Naive thymus-derived CD8-positive, alpha-beta T cell (primary cell): ENCODE measurements at regions of chr22 and their contacts with region 1.

Region 1: DNA sequence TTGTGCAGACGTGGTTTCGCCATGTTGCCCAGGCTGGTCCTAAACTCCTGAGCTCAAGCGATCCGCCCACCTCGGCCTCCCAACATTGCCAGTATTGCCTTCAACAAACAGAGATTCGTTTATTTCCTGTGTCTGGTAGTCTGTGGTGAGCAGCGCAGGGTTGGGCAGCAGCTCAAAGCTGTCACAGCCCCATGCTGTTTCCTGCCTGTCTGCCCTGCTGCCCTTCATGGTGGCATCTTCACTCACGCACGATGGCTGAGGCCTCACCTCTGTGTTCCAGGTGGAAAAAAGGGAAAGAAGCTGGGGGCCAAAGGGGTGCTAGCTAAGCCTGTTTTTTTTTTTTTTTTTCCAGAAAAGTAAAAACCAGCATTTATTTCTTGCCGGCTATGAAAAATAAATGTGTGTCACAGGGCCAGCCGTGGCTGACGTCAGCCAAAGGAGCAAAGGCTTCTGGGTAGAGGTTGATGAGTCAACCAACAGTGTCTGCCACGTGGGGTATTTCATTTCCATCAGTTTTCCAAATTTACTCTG is 28.8 kb downstream of the TBC1D22A start:
- DNase-seq: peak; percentile 51 to 89 (median 80)
- ATAC-seq: peak; percentile 96 to 98
- H3K4me3 Mint-ChIP-seq: peak overlapping the region; percentile 69 to 89 (median 84)
- H3K27ac Mint-ChIP-seq: peak overlapping the region; percentile 99 to 100 (median 100)
- H3K4me1 Mint-ChIP-seq: peaks cover 14 to 62% (median 38%) of the 10 kb centered on the region in 4 donors
- H3K27me3 Mint-ChIP-seq: no peaks in the 10 kb centered on the region

Region 2: DNA sequence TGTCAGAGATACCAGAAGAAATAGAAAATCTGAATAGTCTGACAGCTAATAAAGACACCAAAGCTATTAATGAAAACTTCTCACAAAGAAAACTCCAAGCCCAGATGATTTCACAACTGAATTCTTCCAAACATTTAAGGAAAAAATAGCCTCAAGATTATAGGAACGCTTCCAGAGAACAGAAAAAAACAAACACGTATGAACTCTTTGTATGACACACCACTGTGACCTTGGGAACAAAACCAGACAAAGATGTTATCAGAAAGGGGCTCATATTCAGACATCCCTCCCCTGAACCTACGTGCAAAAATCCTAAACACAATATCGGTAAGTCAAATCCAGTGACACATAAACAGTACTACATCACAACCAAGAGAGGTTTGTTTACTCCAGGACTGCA is 76.7 kb before region 1 on chr22:
- POLR2A ChIA-PET with region 1: no interaction called
- DNase-seq: no peak
- ATAC-seq: no peak
- H3K4me3 Mint-ChIP-seq: no peak overlapping the region
- H3K27ac Mint-ChIP-seq: peak overlapping the region in 3 of 10 donors; percentile 3 to 37 (median 6)
- H3K4me1 Mint-ChIP-seq: peaks cover 7 to 10% (median 8%) of the 10 kb centered on the region in 4 donors
- H3K27me3 Mint-ChIP-seq: no peaks in the 10 kb centered on the region

Region 3: GRCh38 chr22:46737976-46738646 is 53.2 kb before region 1 on chr22 and contains the start of gene CERK:
- POLR2A ChIA-PET with region 1: interaction called, 26 read pairs
- DNase-seq: peak; percentile 39 to 80 (median 58)
- ATAC-seq: peak; percentile 45 to 65
- H3K4me3 Mint-ChIP-seq: peak within 1 kb of the TSS; percentile 91 to 100 (median 100)
- H3K27ac Mint-ChIP-seq: peak within 1 kb of the TSS; percentile 95 to 100 (median 99)
- H3K4me1 Mint-ChIP-seq: peaks cover 25 to 48% (median 48%) of the 10 kb centered on the region in 4 donors
- H3K27me3 Mint-ChIP-seq: no peaks in the 10 kb centered on the region
- polyA plus RNA-seq, gene CERK: 39.4 to 61.2 (median 41.6) TPM

Region 4: DNA sequence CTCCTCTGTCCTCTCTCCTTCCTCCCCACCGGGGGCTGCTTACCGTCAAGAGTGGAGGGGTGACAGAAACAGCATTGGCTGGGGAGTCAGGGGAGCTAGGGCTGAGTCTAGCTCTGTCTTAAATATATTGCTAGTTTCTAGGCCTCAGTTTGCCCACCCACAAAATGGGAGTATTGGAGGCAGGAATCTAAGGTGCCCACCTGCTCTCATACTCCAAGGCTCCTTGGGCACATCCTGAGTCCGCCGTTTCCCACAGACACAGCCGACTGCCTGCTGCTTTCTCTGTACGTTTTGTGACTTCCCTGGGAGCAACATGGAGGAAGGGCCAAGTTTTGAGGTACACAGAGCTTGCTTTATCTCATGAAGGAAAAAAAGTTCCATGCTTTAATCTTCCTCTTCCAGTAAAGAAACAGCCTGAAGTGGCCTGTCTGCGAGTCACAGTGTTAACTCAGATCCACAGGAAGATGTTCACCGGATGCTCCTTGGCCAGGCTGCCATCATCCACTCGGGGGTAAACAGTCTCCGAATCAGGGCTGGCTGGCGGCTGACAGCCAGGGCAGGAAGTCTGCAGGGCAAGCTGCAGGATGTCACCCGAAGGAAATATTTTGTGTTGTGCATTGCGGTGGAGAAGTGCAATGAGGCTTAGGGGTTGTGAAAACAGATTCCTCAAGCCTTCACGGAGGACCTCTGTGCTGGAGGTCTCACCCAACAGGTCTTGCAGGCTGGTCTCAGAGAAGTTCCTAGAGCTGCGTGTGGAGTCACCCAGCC is 42.2 kb before region 1 on chr22:
- POLR2A ChIA-PET with region 1: interaction called, 30 read pairs
- DNase-seq: peak; percentile 28 to 85 (median 65)
- ATAC-seq: peak; percentile 96 to 98
- H3K4me3 Mint-ChIP-seq: peak overlapping the region; percentile 64 to 90 (median 82)
- H3K27ac Mint-ChIP-seq: peak overlapping the region; percentile 92 to 99 (median 96)
- H3K4me1 Mint-ChIP-seq: peaks cover 17 to 35% (median 30%) of the 10 kb centered on the region in 4 donors
- H3K27me3 Mint-ChIP-seq: peaks cover 0 to 2% (median 0%) of the 10 kb centered on the region in 5 donors

Region 5: GRCh38 chr22:46769191-46769675 is 22.0 kb before region 1 on chr22:
- POLR2A ChIA-PET with region 1: interaction called, 81 read pairs
- DNase-seq: no peak
- ATAC-seq: no peak
- H3K4me3 Mint-ChIP-seq: peak overlapping the region in 3 of 10 donors; percentile 41 to 79 (median 41)
- H3K27ac Mint-ChIP-seq: peak overlapping the region; percentile 51 to 96 (median 88)
- H3K4me1 Mint-ChIP-seq: peaks cover 45 to 85% (median 80%) of the 10 kb centered on the region in 4 donors
- H3K27me3 Mint-ChIP-seq: no peaks in the 10 kb centered on the region

Region 6: DNA sequence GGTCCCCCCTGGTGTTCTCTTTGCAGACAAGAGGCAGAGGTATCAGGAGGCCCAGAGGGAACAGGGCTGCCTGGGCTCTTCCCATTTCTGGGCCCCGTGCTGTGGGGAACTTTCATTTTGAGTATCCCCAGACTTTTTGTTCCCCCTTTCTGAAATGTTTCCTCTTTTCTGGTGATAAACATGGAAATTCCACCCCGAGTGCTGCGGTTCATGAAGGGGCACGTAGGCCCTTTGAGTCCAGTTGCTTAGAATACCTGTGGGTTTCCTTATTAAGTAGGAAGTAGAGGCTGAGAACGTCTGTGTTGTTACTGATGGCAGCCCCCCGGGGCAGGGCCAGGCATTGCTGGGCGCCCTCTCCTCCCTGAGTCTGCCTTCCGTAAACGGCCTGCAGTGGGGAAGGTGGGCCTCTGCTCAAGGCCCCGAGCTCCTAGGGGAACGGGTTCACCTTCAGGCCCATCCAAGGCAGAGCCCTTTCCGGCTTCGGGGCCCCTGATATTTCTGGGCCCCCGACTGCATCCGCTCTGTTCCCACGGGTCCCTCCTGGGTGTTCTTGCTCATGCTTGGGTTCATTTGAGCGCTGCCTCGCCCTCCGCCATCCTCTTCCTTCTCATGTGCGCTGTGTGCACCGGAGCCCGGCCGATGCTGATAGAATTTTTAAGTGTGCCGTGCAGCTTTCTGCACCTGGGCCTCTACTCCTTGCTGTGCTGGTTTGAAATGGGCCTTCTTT is 16.9 kb before region 1 on chr22:
- POLR2A ChIA-PET with region 1: interaction called, 14 read pairs
- DNase-seq: no peak
- ATAC-seq: peak; percentile 24 to 33
- H3K4me3 Mint-ChIP-seq: peak overlapping the region; percentile 33 to 83 (median 72)
- H3K27ac Mint-ChIP-seq: peak overlapping the region; percentile 79 to 95 (median 90)
- H3K4me1 Mint-ChIP-seq: peaks cover 47 to 90% (median 79%) of the 10 kb centered on the region in 4 donors
- H3K27me3 Mint-ChIP-seq: no peaks in the 10 kb centered on the region

Region 7: DNA sequence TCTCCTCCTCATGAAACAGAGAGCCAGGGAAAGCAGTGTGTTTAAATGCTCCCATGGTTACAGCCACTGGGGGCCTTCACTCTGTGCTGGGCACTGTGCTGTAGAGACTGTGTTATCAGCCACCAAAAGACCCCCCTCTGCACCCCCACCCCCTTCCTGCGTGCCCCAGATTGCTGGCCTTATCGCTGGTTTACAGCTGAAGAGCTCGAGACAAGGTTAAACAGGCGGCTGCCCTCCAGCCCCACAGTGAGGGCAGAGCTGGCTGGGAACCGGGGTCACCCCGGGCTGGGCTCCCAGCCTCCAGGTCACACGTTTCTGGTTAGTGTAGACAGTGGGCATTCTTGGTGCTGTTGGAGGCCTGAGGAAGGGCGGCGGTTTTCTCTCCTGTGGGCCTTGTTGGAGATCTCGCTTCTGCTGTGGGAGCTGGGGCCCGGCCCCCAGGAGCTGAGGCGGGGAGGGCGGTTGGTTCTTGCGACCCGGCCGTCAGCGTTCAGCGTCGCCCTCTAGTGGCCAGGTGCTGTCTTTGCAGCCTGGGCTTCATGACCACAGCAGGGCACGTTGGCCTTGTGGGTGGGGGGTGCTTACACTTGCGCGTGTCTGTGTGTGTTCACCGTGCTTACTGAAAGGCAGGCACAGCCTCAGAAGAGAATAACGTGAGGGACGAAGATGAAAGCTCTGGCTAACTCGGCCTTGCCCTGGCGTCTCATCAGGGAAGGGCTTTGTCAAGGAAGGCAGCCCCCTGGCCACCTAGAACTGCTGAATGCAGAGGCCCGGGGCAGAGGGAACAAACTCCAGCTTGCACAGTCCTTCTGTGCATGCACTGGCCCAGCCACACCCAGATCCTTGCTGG is 12.0 kb after region 1 on chr22:
- POLR2A ChIA-PET with region 1: interaction called, 15 read pairs
- DNase-seq: peak; percentile 66 to 85 (median 73)
- ATAC-seq: peak; percentile 85 to 89
- H3K4me3 Mint-ChIP-seq: peak overlapping the region in 6 of 10 donors; percentile 13 to 59 (median 46)
- H3K27ac Mint-ChIP-seq: peak overlapping the region; percentile 66 to 93 (median 82)
- H3K4me1 Mint-ChIP-seq: peaks cover 27 to 67% (median 62%) of the 10 kb centered on the region in 4 donors
- H3K27me3 Mint-ChIP-seq: no peaks in the 10 kb centered on the region

Region 8: DNA sequence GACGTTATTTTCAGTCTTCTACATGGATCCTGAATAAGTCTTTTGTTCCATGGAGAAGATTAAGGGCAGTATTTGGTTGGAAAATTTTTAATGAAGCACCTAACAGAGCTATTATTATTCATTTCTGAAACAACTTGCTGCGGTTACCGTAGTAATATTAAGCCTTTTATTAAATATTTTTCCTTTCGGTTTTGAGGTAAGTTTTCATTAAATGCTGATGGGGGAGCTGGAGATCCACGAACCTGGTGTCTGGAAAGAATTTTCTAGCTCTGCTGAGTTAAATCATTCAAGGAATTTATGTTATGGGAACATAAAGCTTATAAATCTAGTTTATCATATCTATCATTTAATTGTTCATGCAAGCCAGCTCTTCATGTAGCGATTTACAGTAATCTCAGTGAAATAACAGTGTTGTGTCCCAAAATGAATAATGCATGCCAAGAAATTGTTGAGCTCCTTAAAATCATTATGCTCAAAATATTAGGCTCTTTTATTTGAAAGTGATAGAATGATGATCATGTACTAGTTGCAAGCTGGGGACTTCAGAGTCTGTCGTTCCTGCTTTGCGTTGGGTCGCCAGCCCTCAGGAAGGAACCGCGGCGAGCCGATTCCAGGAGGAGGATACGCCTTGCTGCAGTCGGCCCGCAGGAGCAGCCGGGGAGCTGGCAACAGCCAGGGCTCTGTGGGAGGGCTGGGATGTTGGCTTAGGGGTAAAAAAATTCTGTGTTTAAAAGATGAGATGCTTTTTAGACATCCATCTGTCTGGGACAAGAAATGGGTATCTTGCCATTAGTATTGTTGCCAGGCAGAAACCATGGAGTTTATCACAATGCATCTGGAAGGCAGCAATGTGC is 54.3 kb after region 1 on chr22:
- POLR2A ChIA-PET with region 1: no interaction called
- DNase-seq: no peak
- ATAC-seq: no peak
- H3K4me3 Mint-ChIP-seq: no peak overlapping the region
- H3K27ac Mint-ChIP-seq: no peak overlapping the region
- H3K4me1 Mint-ChIP-seq: peaks cover 43 to 79% (median 61%) of the 10 kb centered on the region in 4 donors
- H3K27me3 Mint-ChIP-seq: no peaks in the 10 kb centered on the region